ENCODE measurements at regions of chr5 and their contacts with region 1.

Region 1: DNA sequence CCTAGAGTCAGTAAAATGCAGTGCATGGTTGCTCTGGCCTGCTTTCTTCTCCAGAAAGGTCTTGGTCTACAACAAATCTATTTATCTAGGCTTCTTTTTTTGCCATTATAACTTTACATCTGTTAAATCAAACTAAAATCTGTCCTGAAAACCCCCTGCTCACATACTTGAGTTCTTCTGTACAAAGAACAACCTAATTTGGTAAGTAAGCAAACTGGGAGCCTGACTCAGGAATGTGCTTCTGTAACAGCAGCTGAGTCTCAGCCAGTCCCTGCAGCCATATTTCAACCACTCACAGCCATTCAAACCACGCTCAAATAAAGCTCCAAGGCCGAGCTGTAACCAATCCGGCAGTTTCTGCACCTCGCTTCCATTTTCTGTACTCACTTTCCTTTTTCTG is 95.8 kb downstream of the PLPP1 start:
- DNase-seq: no peak

Region 2: GRCh38 chr5:55480781-55481180 is 41.8 kb after region 1 on chr5:
- intact Hi-C with region 1: no loop called
- DNase-seq: no peak

Region 3: DNA sequence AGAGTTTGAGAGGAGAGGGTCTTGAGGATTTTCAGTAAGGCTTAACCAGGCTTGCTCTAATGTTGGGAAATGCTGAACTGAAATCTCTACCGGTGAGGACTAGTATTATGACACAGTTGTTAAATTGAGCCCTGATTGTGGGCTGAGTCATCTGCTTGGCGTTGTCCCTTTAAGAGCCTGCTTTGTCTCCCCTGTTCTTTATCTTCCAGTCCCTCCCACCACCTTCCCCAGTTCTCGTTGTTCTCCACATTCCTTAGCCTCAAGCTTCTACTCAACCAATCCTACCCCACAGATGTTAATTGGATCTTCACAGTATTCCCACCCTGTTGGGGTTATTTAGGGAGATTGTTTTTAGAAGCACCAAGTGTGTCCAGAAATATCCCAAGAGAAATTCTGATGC is 736.5 kb after region 1 on chr5:
- intact Hi-C with region 1: loop called in 1 of 2 experiments (anchors 10 kb)
- DNase-seq: no peak

Measured in posterior vena cava (tissue), 2 donors.